Colonic mucosa (tissue), 4 donors: ENCODE measurements at regions of chr1 and their contacts with region 1.

Region 1: GRCh38 chr1:228212966-228213844 is 5.4 kb downstream of the OBSCN start:
- DNase-seq: peak; percentile 92
- H3K4me3 ChIP-seq: peak overlapping the region; percentile 46
- H3K27ac ChIP-seq: no peak overlapping the region
- H3K4me1 ChIP-seq: no peaks in the 10 kb centered on the region
- H3K27me3 ChIP-seq: no peaks in the 10 kb centered on the region
- CTCF ChIP-seq: peak; percentile 31

Region 2: DNA sequence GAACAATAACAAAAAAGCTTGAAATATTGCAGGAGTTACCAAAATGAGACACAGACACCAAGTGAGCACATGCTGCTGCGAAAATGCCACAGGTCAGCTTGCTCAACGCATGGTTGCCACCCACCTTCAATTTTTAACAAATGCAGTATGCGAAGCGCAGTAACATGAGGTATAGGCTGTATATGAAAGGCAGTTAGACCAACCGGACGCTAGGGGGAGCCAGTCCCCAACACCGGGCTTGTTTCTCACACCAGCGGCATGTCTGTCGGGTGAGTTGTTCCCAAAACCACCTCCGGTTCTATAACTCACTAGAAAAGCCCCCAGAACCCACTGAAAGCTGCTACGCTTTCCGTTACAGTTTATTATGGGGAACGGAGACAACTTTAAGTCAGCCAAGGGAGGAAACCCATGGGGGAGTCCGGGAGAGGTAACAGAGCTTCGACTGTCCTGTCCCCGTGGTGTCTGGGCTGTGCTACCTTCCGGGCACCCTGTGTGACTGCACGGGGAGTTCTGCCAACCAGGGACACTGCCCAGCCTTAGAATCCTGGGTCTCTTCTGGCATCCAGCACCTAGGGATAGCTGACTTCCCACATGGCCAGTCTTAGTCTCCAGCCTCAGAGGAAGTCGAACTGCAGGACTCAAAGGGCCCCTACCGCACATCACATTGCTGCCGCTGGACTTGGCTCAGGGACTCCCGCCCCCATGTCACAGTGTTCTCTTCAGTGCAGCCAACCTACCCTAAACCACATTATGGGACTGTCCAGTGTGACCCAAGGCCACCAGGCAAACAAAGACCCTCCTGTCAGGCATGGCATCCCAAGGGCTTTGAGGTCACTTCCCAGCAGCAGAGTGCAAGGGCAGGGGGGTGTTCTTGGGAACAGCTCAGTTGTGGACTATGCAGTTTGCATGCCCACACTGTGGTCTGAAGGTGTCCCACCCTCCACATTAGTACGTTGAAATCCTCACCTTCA is 288.0 kb after region 1 on chr1:
- intact Hi-C with region 1: loop called (anchors 10 kb)
- DNase-seq: peak; percentile 84
- H3K4me3 ChIP-seq: no peak overlapping the region
- H3K27ac ChIP-seq: no peak overlapping the region
- H3K4me1 ChIP-seq: no peaks in the 10 kb centered on the region
- H3K27me3 ChIP-seq: no peaks in the 10 kb centered on the region
- CTCF ChIP-seq: peak; percentile 96